Activated naive CD4-positive, alpha-beta T cell treated with anti-CD3 and anti-CD28 coated beads for 36 hours (primary cell): ENCODE measurements at regions of chr14 and their contacts with region 1.

Region 1: GRCh38 chr14:50311975-50312733 is at the starts of genes DMAC2L and L2HGDH:
- DNase-seq: peak; percentile 89
- H3K4me3 Mint-ChIP-seq: peak within 1 kb of the TSS; percentile 94
- H3K27ac Mint-ChIP-seq: peak within 1 kb of the TSS; percentile 95
- H3K4me1 Mint-ChIP-seq: peaks cover 41% of the 10 kb centered on the region
- H3K27me3 Mint-ChIP-seq: no peaks in the 10 kb centered on the region
- total RNA-seq, gene DMAC2L: 11.7 to 13.7 TPM
- total RNA-seq, gene L2HGDH: 13.5 to 14.3 TPM

Region 2: GRCh38 chr14:49598485-49599300 is 713.5 kb before region 1 on chr14 and contains the start of gene LRR1:
- CTCF ChIA-PET with region 1: no interaction called
- intact Hi-C with region 1: loop called (anchors 1 kb)
- DNase-seq: peak; percentile 87
- H3K4me3 Mint-ChIP-seq: peak within 1 kb of the TSS; percentile 99
- H3K27ac Mint-ChIP-seq: peak within 1 kb of the TSS; percentile 99
- H3K4me1 Mint-ChIP-seq: peaks cover 20% of the 10 kb centered on the region
- H3K27me3 Mint-ChIP-seq: no peaks in the 10 kb centered on the region
- total RNA-seq, gene LRR1: 47.7 to 49.1 TPM

Region 3: GRCh38 chr14:49767562-49768300 is 544.4 kb before region 1 on chr14 and contains the start of gene KLHDC2:
- CTCF ChIA-PET with region 1: no interaction called
- intact Hi-C with region 1: loop called (anchors 1 kb)
- DNase-seq: peak; percentile 91
- H3K4me3 Mint-ChIP-seq: peak within 1 kb of the TSS; percentile 94
- H3K27ac Mint-ChIP-seq: peak within 1 kb of the TSS; percentile 99
- H3K4me1 Mint-ChIP-seq: peaks cover 34% of the 10 kb centered on the region
- H3K27me3 Mint-ChIP-seq: no peaks in the 10 kb centered on the region
- total RNA-seq, gene KLHDC2: 24.3 to 25.0 TPM

Region 4: DNA sequence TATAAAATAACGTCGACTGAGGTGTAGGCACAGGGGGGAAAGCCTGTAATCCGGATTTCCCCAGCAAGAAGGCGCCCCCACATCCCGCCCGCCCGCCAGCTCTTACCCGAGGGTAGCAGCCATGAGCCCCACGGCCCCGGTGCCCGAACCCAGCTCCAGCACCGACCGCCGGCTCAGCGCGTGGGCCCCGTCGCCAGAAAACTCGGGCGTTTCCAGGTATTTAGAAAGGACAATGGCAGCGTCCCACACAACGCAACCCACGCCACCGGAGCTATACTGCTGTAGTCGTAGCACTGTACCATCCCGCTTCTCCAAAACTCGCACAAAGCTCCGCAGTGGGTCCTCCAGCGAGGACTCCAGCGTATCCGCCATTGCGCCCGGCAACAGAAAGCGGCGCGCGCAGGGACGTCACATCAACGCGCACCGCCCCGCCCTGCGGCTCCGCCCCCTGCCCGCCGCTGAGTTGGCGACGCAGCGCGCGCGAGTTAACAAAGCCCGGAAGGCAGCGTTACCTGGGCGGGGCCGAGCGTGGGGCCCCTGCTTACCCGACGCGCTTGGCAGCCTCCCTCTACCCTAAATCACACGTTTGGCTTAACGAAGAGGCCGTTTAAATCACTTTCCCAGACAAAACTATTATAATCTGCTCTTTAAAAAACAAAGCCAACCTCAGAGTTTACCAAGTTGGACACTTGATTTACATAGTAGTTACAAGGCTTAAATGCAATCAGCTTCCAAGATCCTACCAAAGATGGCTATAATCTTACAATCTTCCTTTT is 195.8 kb before region 1 on chr14 and contains the start of gene VCPKMT:
- CTCF ChIA-PET with region 1: no interaction called
- intact Hi-C with region 1: loop called (anchors 1 kb)
- DNase-seq: peak; percentile 96
- H3K4me3 Mint-ChIP-seq: peak within 1 kb of the TSS; percentile 98
- H3K27ac Mint-ChIP-seq: peak within 1 kb of the TSS; percentile 94
- H3K4me1 Mint-ChIP-seq: peaks cover 32% of the 10 kb centered on the region
- H3K27me3 Mint-ChIP-seq: no peaks in the 10 kb centered on the region
- total RNA-seq, gene VCPKMT: 9.6 to 10.5 TPM

Region 5: DNA sequence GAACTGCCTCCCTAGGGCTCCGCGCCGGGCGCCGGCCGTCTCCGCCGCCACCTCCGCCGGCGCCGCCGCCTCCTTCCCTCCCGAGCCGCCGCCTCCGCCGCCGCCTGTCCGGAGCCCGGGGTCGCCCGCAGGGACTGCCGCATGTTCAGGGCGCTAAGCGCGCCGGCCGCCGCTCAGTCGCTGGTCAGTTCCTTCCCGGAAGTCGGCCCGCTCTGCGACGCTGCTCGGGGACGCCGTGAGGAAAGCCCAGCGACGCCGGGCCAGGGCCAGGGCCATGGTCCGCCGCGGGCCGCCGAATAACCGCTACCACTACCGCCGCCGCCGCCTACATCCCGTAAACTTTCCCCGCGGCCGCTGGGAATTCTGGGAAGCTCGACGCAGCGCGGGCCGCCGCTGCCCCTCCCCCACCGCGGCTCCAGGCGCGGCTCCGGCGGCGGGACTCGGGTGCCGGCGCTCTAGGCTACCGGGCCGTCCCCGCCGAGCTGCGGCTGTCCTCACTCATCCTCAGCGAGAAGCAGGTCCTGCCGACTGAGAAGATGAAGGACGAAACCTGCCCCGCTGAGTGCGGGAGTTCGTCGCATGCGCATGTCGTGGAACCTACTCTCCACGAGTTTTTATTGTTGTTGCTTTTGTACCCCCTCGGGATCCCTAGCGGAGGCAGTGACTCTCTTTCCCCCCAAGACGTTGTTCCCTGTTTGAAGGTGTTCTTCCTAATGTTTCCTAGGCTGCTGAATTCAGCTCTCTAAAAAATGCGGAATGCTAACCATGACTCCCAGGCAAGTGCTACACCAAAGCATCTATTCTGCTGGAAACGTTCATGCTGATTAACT is 356.1 kb after region 1 on chr14 and contains the start of gene SAV1:
- CTCF ChIA-PET with region 1: no interaction called
- intact Hi-C with region 1: loop called (anchors 1 kb)
- DNase-seq: peak; percentile 65
- H3K4me3 Mint-ChIP-seq: no peak within 1 kb of the TSS
- H3K27ac Mint-ChIP-seq: peak within 1 kb of the TSS; percentile 56
- H3K4me1 Mint-ChIP-seq: peaks cover 14% of the 10 kb centered on the region
- H3K27me3 Mint-ChIP-seq: no peaks in the 10 kb centered on the region
- total RNA-seq, gene SAV1: 12.7 to 13.5 TPM